ENCODE measurements at regions of chr9 and their contacts with region 1.

Region 1: GRCh38 chr9:129835021-129835871 is at the starts of genes C9orf78 and USP20:
- DNase-seq: peak; percentile 99
- ATAC-seq: peak; percentile 87
- H3K4me3 Mint-ChIP-seq: peak within 1 kb of the TSS; percentile 96
- H3K27ac Mint-ChIP-seq: peak within 1 kb of the TSS; percentile 96
- H3K4me1 Mint-ChIP-seq: peaks cover 55% of the 10 kb centered on the region
- H3K27me3 Mint-ChIP-seq: no peaks in the 10 kb centered on the region
- total RNA-seq, gene C9orf78: 42.8 to 59.8 TPM
- total RNA-seq, gene USP20: 37.6 to 48.5 TPM

Region 2: GRCh38 chr9:129751826-129752801 is 83.1 kb before region 1 on chr9:
- CTCF ChIA-PET with region 1: no interaction called
- POLR2A ChIA-PET with region 1: no interaction called
- intact Hi-C with region 1: no loop called
- DNase-seq: no peak
- ATAC-seq: no peak
- H3K4me3 Mint-ChIP-seq: peak overlapping the region; percentile 23
- H3K27ac Mint-ChIP-seq: no peak overlapping the region
- H3K4me1 Mint-ChIP-seq: peaks cover 14% of the 10 kb centered on the region
- H3K27me3 Mint-ChIP-seq: no peaks in the 10 kb centered on the region

Region 3: DNA sequence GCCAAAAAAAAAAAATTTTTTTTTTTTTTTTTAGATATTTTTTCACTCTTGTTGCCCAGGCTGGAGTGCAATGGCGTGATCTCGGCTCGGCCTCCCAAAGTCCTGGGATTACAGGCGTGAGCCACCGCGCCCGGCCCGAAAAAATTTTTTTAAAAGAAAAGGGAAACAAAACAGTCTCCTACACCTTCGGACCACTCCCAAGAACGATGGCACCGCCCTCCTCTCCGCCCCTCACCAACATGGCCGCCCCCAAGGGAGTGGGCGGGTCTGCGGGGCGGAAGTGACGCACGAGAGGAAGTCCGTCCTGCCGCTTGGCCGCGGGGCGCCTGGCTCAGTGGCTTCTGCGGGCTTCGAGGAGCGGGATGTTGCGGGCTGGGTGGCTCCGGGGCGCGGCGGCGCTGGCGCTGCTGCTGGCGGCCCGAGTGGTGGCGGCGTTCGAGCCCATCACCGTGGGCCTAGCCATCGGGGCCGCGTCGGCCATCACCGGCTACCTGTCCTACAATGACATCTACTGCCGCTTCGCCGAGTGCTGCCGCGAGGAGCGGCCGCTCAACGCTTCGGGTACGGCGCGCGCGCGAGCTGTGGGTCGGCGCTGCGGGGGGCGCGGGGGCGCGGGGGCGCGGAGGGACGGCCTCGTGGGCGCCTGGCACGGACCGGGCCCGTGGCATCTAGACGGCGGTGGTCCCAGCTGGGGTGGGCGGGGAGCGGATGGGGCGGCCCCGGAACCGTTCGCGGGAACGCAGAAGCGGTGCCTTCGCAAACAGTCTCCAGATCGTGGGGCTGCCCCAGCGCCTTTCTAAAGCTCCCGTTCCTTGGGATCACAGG is 32.2 kb before region 1 on chr9 and contains the start of gene TOR1B:
- CTCF ChIA-PET with region 1: no interaction called
- POLR2A ChIA-PET with region 1: interaction called, 4 read pairs
- intact Hi-C with region 1: loop called in 1 of 2 experiments (anchors 1 kb)
- DNase-seq: peak; percentile 95
- ATAC-seq: peak; percentile 92
- H3K4me3 Mint-ChIP-seq: peak within 1 kb of the TSS; percentile 81
- H3K27ac Mint-ChIP-seq: peak within 1 kb of the TSS; percentile 90
- H3K4me1 Mint-ChIP-seq: peaks cover 25% of the 10 kb centered on the region
- H3K27me3 Mint-ChIP-seq: no peaks in the 10 kb centered on the region
- total RNA-seq, gene TOR1B: 18.0 to 22.1 TPM

Region 4: DNA sequence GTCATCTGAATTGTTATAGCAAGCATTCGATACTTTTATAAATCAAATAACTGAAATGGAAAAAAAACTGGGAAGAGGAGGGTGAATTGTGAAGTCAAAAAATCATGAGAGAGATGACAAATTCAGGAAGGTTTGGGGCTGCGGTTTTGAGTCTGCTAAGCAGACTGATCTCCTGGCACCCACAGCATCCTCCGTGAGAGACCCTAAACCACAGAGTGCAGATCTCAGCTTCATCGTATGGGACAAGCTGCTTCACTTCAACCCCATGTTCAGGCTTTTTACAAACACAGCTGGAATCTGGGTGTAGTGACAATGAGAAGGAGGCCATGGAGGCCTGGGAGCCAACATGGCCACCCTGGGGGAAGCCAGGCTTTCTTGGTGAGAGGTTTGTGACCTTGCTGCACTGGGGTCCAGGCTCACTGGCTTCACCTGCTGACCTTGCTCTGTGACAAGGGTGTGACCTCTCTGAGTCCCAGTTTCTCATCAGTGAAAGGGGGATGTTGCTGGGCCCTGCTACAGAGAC is 19.4 kb after region 1 on chr9:
- CTCF ChIA-PET with region 1: no interaction called
- POLR2A ChIA-PET with region 1: interaction called, 5 read pairs
- intact Hi-C with region 1: loop called in 1 of 2 experiments (anchors 1 kb)
- DNase-seq: no peak
- ATAC-seq: no peak
- H3K4me3 Mint-ChIP-seq: no peak overlapping the region
- H3K27ac Mint-ChIP-seq: peak overlapping the region; percentile 82
- H3K4me1 Mint-ChIP-seq: peaks cover 50% of the 10 kb centered on the region
- H3K27me3 Mint-ChIP-seq: no peaks in the 10 kb centered on the region

Region 5: DNA sequence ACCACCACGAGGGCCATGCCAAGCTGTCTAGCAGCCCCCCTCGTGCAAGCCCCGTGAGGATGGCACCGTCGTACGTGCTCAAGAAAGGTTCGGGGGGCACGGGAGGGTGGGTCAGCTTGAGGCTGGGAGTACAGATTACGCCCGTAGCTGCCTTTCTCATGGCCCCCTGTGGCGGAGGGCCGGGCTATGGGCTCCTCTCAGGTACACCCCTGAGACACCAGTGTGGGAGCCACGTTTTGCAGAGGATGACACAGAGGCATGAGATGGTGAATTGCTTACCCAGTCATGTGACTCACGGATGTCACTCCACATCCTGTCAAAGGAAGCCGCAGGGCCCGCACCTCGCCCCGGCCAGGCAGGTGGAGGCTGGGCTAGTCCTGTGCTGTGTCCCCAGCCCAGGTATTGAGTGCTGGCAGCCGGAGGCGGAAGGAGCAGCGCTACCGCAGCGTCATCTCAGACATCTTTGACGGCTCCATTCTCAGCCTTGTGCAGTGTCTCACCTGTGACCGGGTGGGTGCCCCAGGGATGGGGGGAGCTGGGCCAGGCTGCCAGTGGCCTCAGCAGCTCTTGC is 33.8 kb after region 1 on chr9:
- CTCF ChIA-PET with region 1: interaction called, 3 read pairs
- POLR2A ChIA-PET with region 1: interaction called, 3 read pairs
- intact Hi-C with region 1: loop called (anchors 1 to 2 kb)
- DNase-seq: peak; percentile 92
- ATAC-seq: peak; percentile 87
- H3K4me3 Mint-ChIP-seq: peak overlapping the region; percentile 59
- H3K27ac Mint-ChIP-seq: peak overlapping the region; percentile 90
- H3K4me1 Mint-ChIP-seq: peaks cover 69% of the 10 kb centered on the region
- H3K27me3 Mint-ChIP-seq: no peaks in the 10 kb centered on the region

Region 6: GRCh38 chr9:130243015-130243734 is 407.9 kb after region 1 on chr9:
- CTCF ChIA-PET with region 1: no interaction called
- POLR2A ChIA-PET with region 1: no interaction called
- intact Hi-C with region 1: loop called in 1 of 2 experiments (anchors 5 kb)
- DNase-seq: peak; percentile 88
- ATAC-seq: peak; percentile 45
- H3K4me3 Mint-ChIP-seq: peak overlapping the region; percentile 8
- H3K27ac Mint-ChIP-seq: peak overlapping the region; percentile 26
- H3K4me1 Mint-ChIP-seq: peaks cover 32% of the 10 kb centered on the region
- H3K27me3 Mint-ChIP-seq: no peaks in the 10 kb centered on the region

Measured in activated CD4-positive, alpha-beta T cell treated with anti-CD3 and anti-CD28 coated beads for 36 hours (primary cell).